Endothelial cell of umbilical vein (primary cell): ENCODE measurements at regions of chr4 and their contacts with region 1.

Region 1: GRCh38 chr4:87848622-87849351 is 16.0 kb downstream of the MEPE start:
- DNase-seq: peak; percentile 55
- H3K4me3 ChIP-seq: no peak overlapping the region
- H3K27ac ChIP-seq: no peak overlapping the region
- H3K4me1 ChIP-seq: peaks cover 6% of the 10 kb centered on the region
- H3K27me3 ChIP-seq: no peaks in the 10 kb centered on the region
- CTCF ChIP-seq: peak; percentile 49 to 66
- POLR2A ChIP-seq: no peak

Region 2: GRCh38 chr4:87270144-87270543 is 578.6 kb before region 1 on chr4:
- CTCF ChIA-PET with region 1: interaction called, 12 read pairs
- POLR2A ChIA-PET with region 1: no interaction called
- dilution Hi-C with region 1: no loop called
- intact Hi-C with region 1: no loop called
- DNase-seq: peak; percentile 31
- H3K4me3 ChIP-seq: no peak overlapping the region
- H3K27ac ChIP-seq: no peak overlapping the region
- H3K4me1 ChIP-seq: no peaks in the 10 kb centered on the region
- H3K27me3 ChIP-seq: peaks cover 7 to 12% of the 10 kb centered on the region in 2 experiments
- CTCF ChIP-seq: peak; percentile 8 to 32
- POLR2A ChIP-seq: no peak

Region 3: GRCh38 chr4:87543835-87544461 is 304.8 kb before region 1 on chr4:
- CTCF ChIA-PET with region 1: interaction called, 111 read pairs
- POLR2A ChIA-PET with region 1: no interaction called
- dilution Hi-C with region 1: no loop called
- intact Hi-C with region 1: no loop called
- DNase-seq: peak; percentile 48
- H3K4me3 ChIP-seq: no peak overlapping the region
- H3K27ac ChIP-seq: no peak overlapping the region
- H3K4me1 ChIP-seq: no peaks in the 10 kb centered on the region
- H3K27me3 ChIP-seq: peaks cover 0 to 3% of the 10 kb centered on the region in 2 experiments
- CTCF ChIP-seq: peak; percentile 29 to 47
- POLR2A ChIP-seq: no peak

Region 4: DNA sequence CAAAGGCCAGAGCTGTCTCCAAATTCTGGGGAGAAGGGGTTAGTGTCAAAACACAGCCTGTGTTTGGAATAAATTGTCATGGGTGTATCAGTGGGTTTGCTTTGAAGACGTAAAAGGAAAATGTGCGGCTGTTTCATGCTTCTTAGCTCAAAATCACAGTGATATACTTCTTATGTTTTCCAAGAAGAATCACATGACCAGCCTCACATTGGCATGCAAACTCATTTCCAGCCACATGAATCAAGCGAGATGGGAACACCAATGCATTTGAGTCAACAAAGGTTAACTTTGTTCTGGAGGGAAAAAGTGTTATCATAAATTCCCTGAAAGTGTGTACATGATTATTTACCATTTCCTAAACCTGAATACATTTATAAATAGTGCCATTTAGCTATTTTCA is 107.7 kb after region 1 on chr4:
- CTCF ChIA-PET with region 1: interaction called, 13 read pairs
- POLR2A ChIA-PET with region 1: no interaction called
- dilution Hi-C with region 1: no loop called
- intact Hi-C with region 1: no loop called
- DNase-seq: no peak
- H3K4me3 ChIP-seq: no peak overlapping the region
- H3K27ac ChIP-seq: no peak overlapping the region
- H3K4me1 ChIP-seq: no peaks in the 10 kb centered on the region
- H3K27me3 ChIP-seq: no peaks in the 10 kb centered on the region
- CTCF ChIP-seq: no peak
- POLR2A ChIP-seq: no peak

Region 5: DNA sequence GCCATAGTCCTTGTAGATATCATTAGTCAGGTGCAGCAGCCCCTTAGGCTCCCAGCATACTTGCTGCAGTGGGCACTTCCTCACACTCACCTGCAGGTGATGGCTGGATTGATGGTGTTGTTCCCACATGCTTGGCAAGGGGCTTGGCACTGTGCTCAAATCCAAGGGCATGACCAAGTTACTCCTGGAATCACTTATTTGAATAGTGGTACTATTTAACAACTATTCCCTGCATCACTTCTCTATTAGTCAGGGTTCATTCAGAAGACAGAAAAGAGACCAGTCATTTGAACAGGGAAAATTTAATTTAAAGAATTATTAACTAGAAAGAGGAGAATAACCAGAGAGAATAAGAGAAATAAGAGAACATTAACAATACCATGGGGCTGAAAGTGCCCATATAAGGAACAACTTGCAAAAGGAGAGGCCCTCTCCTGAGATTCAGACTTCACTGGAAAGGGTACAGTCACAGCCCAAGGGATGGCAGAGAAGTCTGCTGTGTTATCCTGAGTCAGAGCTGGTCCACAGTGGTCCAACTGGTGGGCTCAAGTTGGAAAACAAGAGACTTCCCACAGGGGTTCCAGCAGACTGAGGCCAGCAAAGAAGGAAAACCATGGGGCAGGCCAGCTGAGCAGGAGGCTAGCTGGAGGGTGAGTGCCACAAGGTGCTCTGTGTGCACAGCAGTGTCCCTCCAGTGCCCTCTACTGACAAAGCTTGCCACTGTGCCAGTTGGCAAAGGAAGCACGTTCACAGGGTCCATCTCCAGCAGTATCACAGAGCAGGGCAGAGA is 136.5 kb after region 1 on chr4:
- CTCF ChIA-PET with region 1: interaction called, 412 read pairs
- POLR2A ChIA-PET with region 1: no interaction called
- dilution Hi-C with region 1: no loop called
- intact Hi-C with region 1: loop called (anchors 1 kb)
- DNase-seq: peak; percentile 66
- H3K4me3 ChIP-seq: no peak overlapping the region
- H3K27ac ChIP-seq: no peak overlapping the region
- H3K4me1 ChIP-seq: no peaks in the 10 kb centered on the region
- H3K27me3 ChIP-seq: peaks cover 2 to 3% of the 10 kb centered on the region in 2 experiments
- CTCF ChIP-seq: peak; percentile 63 to 79
- POLR2A ChIP-seq: no peak

Region 6: GRCh38 chr4:88204882-88205281 is 356.1 kb after region 1 on chr4:
- CTCF ChIA-PET with region 1: interaction called, 20 read pairs
- POLR2A ChIA-PET with region 1: no interaction called
- dilution Hi-C with region 1: no loop called
- intact Hi-C with region 1: no loop called
- DNase-seq: peak; percentile 90
- H3K4me3 ChIP-seq: peak overlapping the region in 1 of 3 experiments; percentile 28
- H3K27ac ChIP-seq: peak overlapping the region; percentile 48
- H3K4me1 ChIP-seq: peaks cover 15% of the 10 kb centered on the region
- H3K27me3 ChIP-seq: no peaks in the 10 kb centered on the region
- CTCF ChIP-seq: peak in 1 of 2 donors; percentile 5
- POLR2A ChIP-seq: no peak

Region 7: GRCh38 chr4:88514557-88515511 is 666.0 kb after region 1 on chr4:
- CTCF ChIA-PET with region 1: interaction called, 7 read pairs
- POLR2A ChIA-PET with region 1: no interaction called
- dilution Hi-C with region 1: no loop called
- intact Hi-C with region 1: loop called (anchors 10 kb)
- DNase-seq: no peak
- H3K4me3 ChIP-seq: no peak overlapping the region
- H3K27ac ChIP-seq: no peak overlapping the region
- H3K4me1 ChIP-seq: peaks cover 10% of the 10 kb centered on the region
- H3K27me3 ChIP-seq: no peaks in the 10 kb centered on the region
- CTCF ChIP-seq: no peak
- POLR2A ChIP-seq: no peak